ENCODE measurements at regions of chr19 and their contacts with region 1.

Region 1: GRCh38 chr19:48588670-48589399 is 17.7 kb upstream of the SPACA4 start:
- DNase-seq: peak; percentile 72 to 98 (median 91)

Region 2: GRCh38 chr19:48255376-48256303 is 333.2 kb before region 1 on chr19 and contains the start of gene CARD8:
- intact Hi-C with region 1: loop called (anchors 10 kb)
- DNase-seq: peak; percentile 49 to 95 (median 78)

Region 3: GRCh38 chr19:48315712-48316111 is 273.1 kb before region 1 on chr19:
- intact Hi-C with region 1: loop called (anchors 2 kb)
- DNase-seq: no peak

Region 4: GRCh38 chr19:48489608-48490216 is 99.1 kb before region 1 on chr19:
- intact Hi-C with region 1: loop called (anchors 1 kb)
- DNase-seq: peak in 9 of 10 donors; percentile 50 to 93 (median 67)

Region 5: GRCh38 chr19:48513289-48514122 is 75.3 kb before region 1 on chr19:
- intact Hi-C with region 1: loop called (anchors 10 kb)
- DNase-seq: peak; percentile 79 to 97 (median 86)